Endothelial cell of umbilical vein (primary cell): ENCODE measurements at regions of chr1 and their contacts with region 1.

Region 1: DNA sequence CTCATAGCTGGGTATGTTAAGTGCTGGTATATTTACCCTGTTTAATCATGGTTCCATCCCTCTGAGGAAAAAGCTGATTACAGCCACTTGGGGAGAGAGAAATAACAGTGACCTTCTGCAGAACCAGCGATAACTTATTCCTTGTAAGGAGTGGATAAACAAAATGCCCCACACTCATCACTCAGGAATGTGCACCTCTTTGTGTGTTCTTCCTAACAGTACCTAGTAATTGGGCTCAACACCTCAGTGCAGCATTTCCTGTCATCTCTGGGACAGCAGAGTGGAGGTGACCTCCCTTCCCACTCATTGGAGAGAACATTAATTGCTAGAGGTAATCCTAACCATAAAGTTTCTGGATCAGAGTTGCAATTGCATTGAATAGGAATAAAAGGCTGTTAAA is 112.5 kb upstream of the F3 start:
- DNase-seq: no peak
- H3K4me3 ChIP-seq: no peak overlapping the region
- H3K27ac ChIP-seq: no peak overlapping the region
- H3K4me1 ChIP-seq: peaks cover 10% of the 10 kb centered on the region
- H3K27me3 ChIP-seq: peaks cover 0 to 2% of the 10 kb centered on the region in 2 experiments
- CTCF ChIP-seq: no peak
- POLR2A ChIP-seq: no peak

Region 2: DNA sequence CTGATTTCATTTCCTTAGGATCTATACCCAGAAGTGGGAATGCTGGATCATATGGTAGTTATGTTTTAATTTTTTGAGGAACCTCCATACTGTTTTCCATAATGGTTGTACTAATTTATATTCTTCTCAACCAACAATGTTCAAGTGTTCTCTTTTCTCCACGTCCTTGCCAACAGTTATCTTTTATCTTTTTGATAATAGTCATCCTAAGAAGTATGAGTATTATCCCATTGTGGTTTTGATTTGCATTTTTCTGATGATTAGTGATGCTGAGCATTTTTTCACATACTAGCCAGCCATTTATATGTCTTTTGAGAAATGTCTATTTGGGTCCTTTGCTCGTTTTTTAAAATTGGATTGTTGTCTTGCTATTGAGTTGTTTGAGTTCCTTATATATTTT is 197.3 kb before region 1 on chr1:
- CTCF ChIA-PET with region 1: no interaction called
- POLR2A ChIA-PET with region 1: interaction called, 11 read pairs
- dilution Hi-C with region 1: no loop called
- intact Hi-C with region 1: no loop called
- DNase-seq: no peak
- H3K4me3 ChIP-seq: no peak overlapping the region
- H3K27ac ChIP-seq: no peak overlapping the region
- H3K4me1 ChIP-seq: no peaks in the 10 kb centered on the region
- H3K27me3 ChIP-seq: no peaks in the 10 kb centered on the region
- CTCF ChIP-seq: no peak
- POLR2A ChIP-seq: no peak